ENCODE measurements at regions of chr12 and their contacts with region 1.

Region 1: GRCh38 chr12:92621838-92622438 is 80.9 kb upstream of the PLEKHG7 start:
- DNase-seq: no peak
- ATAC-seq: no peak

Region 2: DNA sequence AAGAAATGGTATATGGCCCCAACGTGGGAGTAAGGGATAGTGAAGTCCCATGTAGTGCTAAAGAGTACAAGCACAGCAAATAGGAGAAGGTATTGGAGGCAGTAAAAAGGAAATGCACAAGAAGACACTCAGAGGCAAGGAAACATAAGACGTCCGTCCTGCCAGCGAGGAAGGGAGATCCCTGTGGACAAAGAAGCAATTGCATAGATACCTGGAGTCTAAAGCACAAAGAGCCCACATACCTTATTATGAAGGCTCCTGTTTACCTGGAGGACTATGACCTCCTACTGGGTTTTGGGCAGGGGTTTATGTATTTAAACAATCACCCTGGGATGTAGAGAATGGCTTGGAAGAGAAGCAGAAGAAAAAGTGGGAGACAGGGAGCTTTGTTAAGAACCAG is 1098.1 kb before region 1 on chr12:
- intact Hi-C with region 1: no loop called
- DNase-seq: no peak
- ATAC-seq: no peak

Region 3: DNA sequence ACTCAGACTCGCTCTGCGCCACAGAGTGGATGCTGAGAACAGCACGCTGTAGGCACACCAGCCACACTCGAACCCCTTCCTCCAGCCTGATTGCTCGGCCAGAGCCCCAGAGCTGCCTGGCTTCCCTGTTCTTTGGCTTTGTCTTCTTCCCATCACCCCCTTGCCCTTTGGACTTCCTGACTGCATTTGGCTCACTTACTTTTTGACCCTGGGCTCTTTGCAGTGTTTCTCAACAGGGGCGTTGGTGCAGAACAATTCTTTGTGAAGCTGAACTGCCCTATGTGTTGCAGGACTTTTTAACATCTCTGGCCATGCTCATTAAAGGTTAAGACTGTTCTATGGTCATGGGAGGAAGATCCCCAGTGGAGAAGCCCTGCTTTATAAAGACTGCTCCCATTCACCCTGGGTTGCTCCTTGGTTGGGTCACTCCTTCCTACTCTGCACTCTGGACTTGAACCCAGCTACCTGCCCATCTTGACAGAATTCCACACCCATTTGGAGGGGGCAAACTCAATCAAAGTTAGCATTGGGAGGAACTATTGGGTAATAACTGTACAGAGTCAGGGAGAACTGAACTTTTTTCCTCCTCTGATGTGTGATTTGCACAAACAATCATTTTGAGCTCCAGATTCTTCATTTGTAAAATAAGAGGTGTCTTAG is 46.9 kb before region 1 on chr12:
- intact Hi-C with region 1: loop called (anchors 1 kb)
- DNase-seq: no peak
- ATAC-seq: peak; percentile 41